MCF 10A (cell line): ENCODE measurements at regions of chr1 and their contacts with region 1.

Region 1: GRCh38 chr1:25338188-25338981 is at the start of gene TMEM50A:
- DNase-seq: peak; percentile 79
- H3K4me3 Mint-ChIP-seq: peak within 1 kb of the TSS; percentile 89
- H3K27ac Mint-ChIP-seq: peak within 1 kb of the TSS; percentile 88
- H3K4me1 Mint-ChIP-seq: peaks cover 10% of the 10 kb centered on the region
- H3K27me3 Mint-ChIP-seq: no peaks in the 10 kb centered on the region
- CTCF ChIP-seq: no peak
- total RNA-seq, gene TMEM50A: 88.3 and 107 TPM in 2 replicates

Region 2: DNA sequence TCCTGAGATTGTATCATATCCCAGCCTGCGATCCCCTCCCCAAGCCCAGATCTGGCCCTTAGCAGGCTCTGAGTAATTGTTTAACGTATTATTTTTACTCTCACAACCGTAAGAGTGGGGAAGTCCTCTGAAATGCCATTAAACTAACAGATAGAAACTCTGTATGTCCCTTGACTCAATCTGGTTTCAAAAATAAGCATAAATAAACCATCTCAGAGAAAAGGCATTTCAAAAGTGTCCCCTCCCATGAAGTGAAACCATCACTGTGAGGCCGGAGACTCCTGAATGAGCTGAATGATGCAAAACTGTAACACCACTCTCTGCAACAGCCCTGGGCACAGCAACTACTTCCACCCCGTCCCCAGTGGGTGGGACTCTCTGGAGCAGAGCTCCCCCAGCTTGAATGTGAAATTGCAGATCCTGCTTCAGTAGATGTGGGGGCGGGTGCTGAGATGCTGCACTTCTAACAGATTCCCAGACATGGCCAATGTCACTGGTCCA is 210.2 kb before region 1 on chr1:
- CTCF ChIA-PET with region 1: no interaction called
- POLR2A ChIA-PET with region 1: no interaction called
- intact Hi-C with region 1: no loop called
- DNase-seq: no peak
- H3K4me3 Mint-ChIP-seq: no peak overlapping the region
- H3K27ac Mint-ChIP-seq: no peak overlapping the region
- H3K4me1 Mint-ChIP-seq: no peaks in the 10 kb centered on the region
- H3K27me3 Mint-ChIP-seq: peaks cover 11% of the 10 kb centered on the region
- CTCF ChIP-seq: no peak

Region 3: DNA sequence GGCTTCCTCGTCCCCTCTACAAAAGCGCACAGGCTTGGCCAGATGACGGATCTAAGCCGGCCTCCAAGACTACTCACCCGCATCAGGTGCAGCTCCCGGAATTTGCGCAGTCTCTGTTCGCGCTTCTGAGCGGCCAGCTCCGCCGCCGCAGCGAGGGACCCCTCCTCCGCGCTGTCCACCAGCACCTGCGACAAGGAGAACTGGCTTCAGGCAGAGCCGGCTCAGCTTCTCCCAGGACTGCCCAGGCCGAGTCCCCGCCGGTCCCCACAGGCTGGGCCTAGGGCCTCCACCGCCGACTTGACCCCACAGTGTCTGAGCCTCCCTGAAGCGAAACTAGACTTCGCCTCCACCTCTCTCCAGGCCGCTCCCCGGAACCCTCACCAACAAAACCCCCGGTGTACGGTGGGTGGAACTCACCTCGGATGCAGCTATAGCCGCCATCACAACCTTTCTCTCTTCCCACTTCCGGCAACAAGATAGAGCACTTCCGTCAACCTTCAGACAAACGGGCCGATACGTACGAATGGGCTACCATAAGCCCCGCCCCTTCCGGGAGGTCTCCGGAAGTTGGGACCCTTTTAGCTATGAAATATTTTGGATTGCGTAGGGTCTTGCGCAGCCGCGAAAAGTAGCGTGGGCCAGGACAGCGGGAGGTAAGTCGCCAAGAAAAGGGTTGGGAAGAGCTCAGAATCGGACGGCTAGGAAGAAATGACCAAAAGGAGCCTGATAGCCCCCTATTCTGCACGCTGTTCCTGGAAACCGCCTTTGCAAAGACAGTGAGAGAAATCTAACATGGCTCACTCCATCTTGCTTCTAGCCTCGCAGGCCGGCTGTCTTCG is 106.1 kb before region 1 on chr1 and contains the start of gene SYF2:
- CTCF ChIA-PET with region 1: no interaction called
- POLR2A ChIA-PET with region 1: interaction called, 25 read pairs
- intact Hi-C with region 1: no loop called
- DNase-seq: peak; percentile 91
- H3K4me3 Mint-ChIP-seq: no peak within 1 kb of the TSS
- H3K27ac Mint-ChIP-seq: no peak within 1 kb of the TSS
- H3K4me1 Mint-ChIP-seq: peaks cover 7% of the 10 kb centered on the region
- H3K27me3 Mint-ChIP-seq: no peaks in the 10 kb centered on the region
- CTCF ChIP-seq: no peak
- total RNA-seq, gene SYF2: 40.5 and 43.0 TPM in 2 replicates

Region 4: DNA sequence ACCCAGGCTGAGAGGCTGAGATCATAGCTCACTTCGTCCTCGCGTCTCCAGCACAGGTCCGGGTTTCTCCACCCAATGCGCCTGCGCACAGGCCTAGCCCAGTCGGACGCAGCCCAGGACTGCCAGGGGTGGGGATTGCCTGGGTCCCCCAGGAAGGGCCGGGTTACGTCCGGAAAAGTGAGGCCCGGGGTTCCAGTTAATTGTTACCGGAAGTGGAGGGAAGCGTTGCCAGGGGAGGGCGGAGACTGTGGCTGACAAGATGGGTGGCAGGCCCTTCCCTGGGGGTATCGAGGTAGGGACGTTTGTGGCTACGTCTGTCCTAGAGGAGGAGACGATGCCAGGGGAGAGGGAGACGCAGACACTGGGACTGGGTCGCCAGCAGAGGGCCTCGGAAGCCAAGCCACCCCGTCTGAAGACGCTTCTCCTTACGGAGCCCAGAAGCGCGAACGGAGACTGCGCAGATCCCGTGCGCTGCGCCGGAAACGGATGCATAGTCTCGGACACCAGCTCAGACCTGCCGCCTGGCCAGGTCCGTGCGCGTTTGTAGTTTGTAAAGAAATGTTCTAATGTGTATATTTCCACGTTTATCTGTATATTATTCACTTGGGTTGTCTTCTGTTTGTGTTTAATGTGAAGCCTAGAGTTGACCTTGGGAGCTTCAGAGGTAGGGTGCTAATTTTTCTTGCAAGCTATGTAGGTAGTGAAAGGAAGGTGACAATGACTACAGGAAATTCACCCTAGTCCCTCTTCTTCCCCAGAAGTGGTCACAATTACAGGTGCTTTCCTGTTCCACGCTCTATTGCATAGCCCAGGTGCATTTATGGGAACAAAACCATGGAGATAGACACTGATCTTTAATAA is 98.5 kb before region 1 on chr1:
- CTCF ChIA-PET with region 1: no interaction called
- POLR2A ChIA-PET with region 1: interaction called, 16 read pairs
- intact Hi-C with region 1: no loop called
- DNase-seq: peak; percentile 96
- H3K4me3 Mint-ChIP-seq: peak overlapping the region; percentile 78
- H3K27ac Mint-ChIP-seq: peak overlapping the region; percentile 85
- H3K4me1 Mint-ChIP-seq: peaks cover 24% of the 10 kb centered on the region
- H3K27me3 Mint-ChIP-seq: no peaks in the 10 kb centered on the region
- CTCF ChIP-seq: peak; percentile 48

Region 5: GRCh38 chr1:25247024-25247828 is 91.2 kb before region 1 on chr1 and contains the start of gene RSRP1:
- CTCF ChIA-PET with region 1: no interaction called
- POLR2A ChIA-PET with region 1: interaction called, 16 read pairs
- intact Hi-C with region 1: no loop called
- DNase-seq: peak; percentile 96
- H3K4me3 Mint-ChIP-seq: peak within 1 kb of the TSS; percentile 93
- H3K27ac Mint-ChIP-seq: peak within 1 kb of the TSS; percentile 98
- H3K4me1 Mint-ChIP-seq: peaks cover 13% of the 10 kb centered on the region
- H3K27me3 Mint-ChIP-seq: no peaks in the 10 kb centered on the region
- CTCF ChIP-seq: no peak
- total RNA-seq, gene RSRP1: 77.2 and 86.4 TPM in 2 replicates

Region 6: GRCh38 chr1:25356848-25357247 is 18.5 kb after region 1 on chr1:
- CTCF ChIA-PET with region 1: interaction called, 4 read pairs
- POLR2A ChIA-PET with region 1: interaction called, 15 read pairs
- intact Hi-C with region 1: no loop called
- DNase-seq: peak; percentile 41
- H3K4me3 Mint-ChIP-seq: no peak overlapping the region
- H3K27ac Mint-ChIP-seq: peak overlapping the region; percentile 52
- H3K4me1 Mint-ChIP-seq: peaks cover 18% of the 10 kb centered on the region
- H3K27me3 Mint-ChIP-seq: no peaks in the 10 kb centered on the region
- CTCF ChIP-seq: no peak

Region 7: DNA sequence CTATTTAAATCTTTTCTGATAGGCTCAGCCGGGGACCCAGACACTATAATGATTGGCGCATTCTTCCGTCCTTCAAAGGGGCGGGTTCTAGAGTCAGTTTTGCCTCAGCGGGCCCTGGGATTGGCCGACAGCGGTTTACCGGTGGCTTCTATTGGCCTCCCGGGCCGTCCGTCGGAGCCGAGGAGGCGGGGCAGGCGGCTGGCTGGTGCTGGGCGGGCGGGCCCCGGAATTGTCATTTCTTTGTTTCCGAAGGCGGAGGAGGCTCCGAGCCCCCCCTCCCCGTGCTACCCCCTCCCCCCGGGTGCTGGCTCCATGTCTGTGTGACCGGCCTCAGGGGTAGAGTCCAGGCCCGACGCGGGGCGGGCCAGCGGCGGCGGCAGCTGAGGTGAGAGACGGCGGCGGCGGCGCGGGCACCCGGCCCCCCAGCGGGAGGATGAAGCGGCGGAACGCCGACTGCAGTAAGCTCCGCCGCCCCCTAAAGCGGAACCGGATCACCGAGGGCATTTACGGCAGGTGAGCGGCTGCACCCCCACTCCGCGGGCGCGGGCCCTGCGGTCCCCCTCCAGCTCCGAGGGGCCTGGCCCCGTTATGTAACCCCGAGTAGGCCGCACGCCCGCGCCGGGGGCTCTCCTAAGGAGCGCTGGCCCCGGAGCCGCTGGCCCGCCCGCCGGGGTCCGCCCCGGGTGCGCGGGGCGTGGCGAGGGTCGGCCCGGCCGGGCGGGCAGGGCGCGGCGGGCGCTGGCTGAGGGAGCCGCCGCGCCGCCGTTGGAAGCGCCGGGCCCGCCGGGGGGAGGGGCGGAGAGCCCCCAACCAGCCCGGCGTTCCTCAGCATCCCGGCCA is 92.5 kb after region 1 on chr1 and contains the start of gene MACO1:
- CTCF ChIA-PET with region 1: no interaction called
- POLR2A ChIA-PET with region 1: interaction called, 14 read pairs
- intact Hi-C with region 1: no loop called
- DNase-seq: peak; percentile 96
- H3K4me3 Mint-ChIP-seq: peak within 1 kb of the TSS; percentile 89
- H3K27ac Mint-ChIP-seq: peak within 1 kb of the TSS; percentile 92
- H3K4me1 Mint-ChIP-seq: peaks cover 27% of the 10 kb centered on the region
- H3K27me3 Mint-ChIP-seq: no peaks in the 10 kb centered on the region
- CTCF ChIP-seq: no peak
- total RNA-seq, gene MACO1: 17.4 and 19.3 TPM in 2 replicates